ENCODE measurements at regions of chr5 and their contacts with region 1.

Region 1: GRCh38 chr5:133287500-133287899 is 235.7 kb downstream of the HSPA4 start:
- DNase-seq: peak; percentile 67
- H3K4me3 Mint-ChIP-seq: no peak overlapping the region
- H3K27ac Mint-ChIP-seq: no peak overlapping the region
- H3K4me1 Mint-ChIP-seq: peaks cover 38% of the 10 kb centered on the region
- H3K27me3 Mint-ChIP-seq: no peaks in the 10 kb centered on the region
- CTCF ChIP-seq: peak; percentile 66

Region 2: DNA sequence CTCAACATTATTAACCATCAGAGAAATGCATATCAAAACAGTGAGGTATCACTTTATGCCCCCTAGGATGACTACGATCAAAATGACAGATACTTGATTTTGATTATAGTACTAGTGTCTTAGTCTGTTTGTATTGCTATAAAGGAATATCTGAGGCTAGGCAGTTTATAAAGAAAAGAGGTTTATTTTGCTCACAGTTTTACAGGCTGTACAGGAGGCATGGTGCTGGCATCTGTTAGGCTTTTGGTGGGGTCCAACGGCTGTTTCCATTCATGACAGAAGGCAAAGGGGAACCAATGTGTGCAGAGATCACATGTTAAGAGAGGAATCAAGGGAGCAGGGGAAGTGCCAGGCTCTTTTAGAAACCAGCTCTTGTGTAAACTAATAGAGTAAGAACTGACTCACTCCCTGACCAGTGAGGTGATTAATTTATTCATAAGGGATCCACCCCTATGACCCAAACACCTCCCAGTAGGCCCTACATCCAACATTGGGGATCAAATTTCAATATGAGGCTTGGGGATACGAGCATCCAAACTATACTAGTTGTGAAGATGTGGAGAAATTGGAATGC is 308.0 kb before region 1 on chr5:
- CTCF ChIA-PET with region 1: no interaction called
- POLR2A ChIA-PET with region 1: no interaction called
- intact Hi-C with region 1: no loop called
- DNase-seq: peak; percentile 73
- H3K4me3 Mint-ChIP-seq: no peak overlapping the region
- H3K27ac Mint-ChIP-seq: no peak overlapping the region
- H3K4me1 Mint-ChIP-seq: peaks cover 6% of the 10 kb centered on the region
- H3K27me3 Mint-ChIP-seq: no peaks in the 10 kb centered on the region
- CTCF ChIP-seq: no peak

Region 3: DNA sequence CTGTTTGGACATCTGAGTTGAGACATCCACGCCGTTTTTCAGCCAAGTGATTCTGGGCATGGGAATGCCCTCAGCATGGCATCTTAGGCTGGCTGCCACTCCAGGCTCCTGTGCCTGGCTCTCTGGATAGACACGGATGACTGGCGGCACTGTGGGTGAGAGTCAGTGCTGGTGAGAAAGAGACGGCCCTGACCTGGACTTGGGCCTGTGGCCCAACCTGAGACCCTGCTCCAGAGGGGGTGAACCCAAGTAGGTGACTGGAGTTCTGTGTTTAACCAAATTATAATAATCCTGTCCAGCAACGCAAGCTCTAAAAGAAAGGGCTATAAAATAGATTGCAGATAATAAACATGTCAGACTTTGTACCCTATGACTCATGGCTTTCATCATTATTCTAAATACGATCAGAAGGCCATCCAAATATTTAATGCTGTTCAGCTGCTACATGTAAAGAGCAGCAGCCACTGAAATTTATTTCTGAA is 61.8 kb before region 1 on chr5:
- CTCF ChIA-PET with region 1: interaction called, 8 read pairs
- POLR2A ChIA-PET with region 1: interaction called, 19 read pairs
- intact Hi-C with region 1: no loop called
- DNase-seq: peak; percentile 56
- H3K4me3 Mint-ChIP-seq: peak overlapping the region; percentile 23
- H3K27ac Mint-ChIP-seq: peak overlapping the region; percentile 69
- H3K4me1 Mint-ChIP-seq: peaks cover 52% of the 10 kb centered on the region
- H3K27me3 Mint-ChIP-seq: no peaks in the 10 kb centered on the region
- CTCF ChIP-seq: no peak

Region 4: DNA sequence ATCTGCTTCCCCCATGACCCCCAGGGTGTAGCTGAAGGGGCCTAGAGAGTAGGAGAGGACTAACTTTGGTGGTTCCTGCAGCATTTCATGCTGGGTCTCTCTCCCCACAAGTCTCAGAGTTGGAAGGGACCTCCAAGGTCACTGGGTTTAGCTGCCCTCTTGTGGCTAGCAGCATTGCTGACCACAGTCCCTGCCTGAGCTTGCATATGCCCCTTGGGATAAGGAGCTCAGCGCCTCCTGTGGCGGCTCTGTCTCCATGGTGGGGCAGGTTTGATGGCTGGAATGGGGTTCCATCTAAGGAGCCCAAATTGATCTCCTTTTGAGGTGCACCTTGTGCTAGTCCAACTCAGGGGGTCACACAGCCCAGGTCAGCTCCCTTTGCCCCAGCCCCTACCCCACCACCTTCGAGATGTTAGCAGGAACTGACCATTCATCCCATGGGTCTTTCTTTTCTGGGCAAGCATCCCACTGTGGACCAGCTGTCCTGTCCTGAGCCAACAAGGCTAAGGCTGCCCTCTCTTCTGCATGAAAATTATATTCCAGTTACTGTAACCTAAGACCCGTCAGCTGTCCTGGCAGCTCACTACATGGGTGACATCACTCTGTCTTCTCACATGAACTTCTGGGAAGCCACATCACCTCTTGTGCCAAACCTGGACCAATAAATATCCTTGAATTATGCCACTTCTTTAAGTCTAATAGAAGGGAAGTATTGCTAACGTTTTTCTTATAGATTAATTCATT is 39.4 kb before region 1 on chr5:
- CTCF ChIA-PET with region 1: interaction called, 5 read pairs
- POLR2A ChIA-PET with region 1: interaction called, 12 read pairs
- intact Hi-C with region 1: loop called (anchors 5 kb)
- DNase-seq: peak; percentile 75
- H3K4me3 Mint-ChIP-seq: no peak overlapping the region
- H3K27ac Mint-ChIP-seq: no peak overlapping the region
- H3K4me1 Mint-ChIP-seq: peaks cover 23% of the 10 kb centered on the region
- H3K27me3 Mint-ChIP-seq: no peaks in the 10 kb centered on the region
- CTCF ChIP-seq: peak; percentile 57

Region 5: GRCh38 chr5:133309166-133309795 is 21.8 kb after region 1 on chr5:
- CTCF ChIA-PET with region 1: interaction called, 11 read pairs
- POLR2A ChIA-PET with region 1: interaction called, 4 read pairs
- intact Hi-C with region 1: no loop called
- DNase-seq: no peak
- H3K4me3 Mint-ChIP-seq: no peak overlapping the region
- H3K27ac Mint-ChIP-seq: no peak overlapping the region
- H3K4me1 Mint-ChIP-seq: no peaks in the 10 kb centered on the region
- H3K27me3 Mint-ChIP-seq: no peaks in the 10 kb centered on the region
- CTCF ChIP-seq: no peak

Region 6: DNA sequence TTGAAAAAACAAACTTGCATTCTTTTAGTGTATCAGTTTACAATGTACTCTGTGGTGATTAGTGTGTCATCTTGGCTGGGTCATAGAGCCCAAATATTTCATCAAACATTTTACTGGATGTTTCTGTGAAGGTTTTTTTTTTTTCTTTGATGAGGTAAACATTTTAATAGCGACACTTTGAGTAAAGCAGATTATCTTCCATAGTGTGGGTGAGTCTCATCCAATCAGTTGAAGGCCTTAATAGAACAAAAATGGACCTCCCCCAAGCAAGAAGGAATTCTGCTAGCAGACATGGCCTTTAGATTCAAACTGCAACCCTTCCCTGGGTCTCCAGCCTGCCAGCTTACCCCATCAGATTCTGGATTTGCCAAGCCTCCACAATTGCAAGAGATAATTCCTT is 252.3 kb after region 1 on chr5:
- CTCF ChIA-PET with region 1: no interaction called
- POLR2A ChIA-PET with region 1: no interaction called
- intact Hi-C with region 1: no loop called
- DNase-seq: no peak
- H3K4me3 Mint-ChIP-seq: no peak overlapping the region
- H3K27ac Mint-ChIP-seq: no peak overlapping the region
- H3K4me1 Mint-ChIP-seq: no peaks in the 10 kb centered on the region
- H3K27me3 Mint-ChIP-seq: peaks cover 90% of the 10 kb centered on the region
- CTCF ChIP-seq: no peak